Naive thymus-derived CD8-positive, alpha-beta T cell (primary cell): ENCODE measurements at regions of chr1 and their contacts with region 1.

Region 1: GRCh38 chr1:45512641-45513054 is 9.0 kb downstream of the PRDX1 start:
- DNase-seq: peak; percentile 24 to 78 (median 46)
- ATAC-seq: peak; percentile 52 to 76
- H3K4me3 Mint-ChIP-seq: no peak overlapping the region
- H3K27ac Mint-ChIP-seq: peak overlapping the region in 7 of 10 donors; percentile 2 to 73 (median 27)
- H3K4me1 Mint-ChIP-seq: peaks cover 0 to 4% (median 1%) of the 10 kb centered on the region in 4 donors
- H3K27me3 Mint-ChIP-seq: no peaks in the 10 kb centered on the region

Region 2: GRCh38 chr1:45455162-45455561 is 57.5 kb before region 1 on chr1:
- POLR2A ChIA-PET with region 1: no interaction called
- DNase-seq: no peak
- ATAC-seq: no peak
- H3K4me3 Mint-ChIP-seq: no peak overlapping the region
- H3K27ac Mint-ChIP-seq: peak overlapping the region in 1 of 10 donors; percentile 29
- H3K4me1 Mint-ChIP-seq: peaks cover 0 to 2% (median 0%) of the 10 kb centered on the region in 4 donors
- H3K27me3 Mint-ChIP-seq: no peaks in the 10 kb centered on the region

Region 3: GRCh38 chr1:45499415-45499769 is 13.3 kb before region 1 on chr1:
- POLR2A ChIA-PET with region 1: interaction called, 15 read pairs
- DNase-seq: no peak
- ATAC-seq: no peak
- H3K4me3 Mint-ChIP-seq: peak overlapping the region; percentile 89 to 98 (median 95)
- H3K27ac Mint-ChIP-seq: peak overlapping the region; percentile 72 to 97 (median 95)
- H3K4me1 Mint-ChIP-seq: peaks cover 26 to 40% (median 36%) of the 10 kb centered on the region in 4 donors
- H3K27me3 Mint-ChIP-seq: no peaks in the 10 kb centered on the region